ENCODE measurements at regions of chr9 and their contacts with region 1.

Region 1: DNA sequence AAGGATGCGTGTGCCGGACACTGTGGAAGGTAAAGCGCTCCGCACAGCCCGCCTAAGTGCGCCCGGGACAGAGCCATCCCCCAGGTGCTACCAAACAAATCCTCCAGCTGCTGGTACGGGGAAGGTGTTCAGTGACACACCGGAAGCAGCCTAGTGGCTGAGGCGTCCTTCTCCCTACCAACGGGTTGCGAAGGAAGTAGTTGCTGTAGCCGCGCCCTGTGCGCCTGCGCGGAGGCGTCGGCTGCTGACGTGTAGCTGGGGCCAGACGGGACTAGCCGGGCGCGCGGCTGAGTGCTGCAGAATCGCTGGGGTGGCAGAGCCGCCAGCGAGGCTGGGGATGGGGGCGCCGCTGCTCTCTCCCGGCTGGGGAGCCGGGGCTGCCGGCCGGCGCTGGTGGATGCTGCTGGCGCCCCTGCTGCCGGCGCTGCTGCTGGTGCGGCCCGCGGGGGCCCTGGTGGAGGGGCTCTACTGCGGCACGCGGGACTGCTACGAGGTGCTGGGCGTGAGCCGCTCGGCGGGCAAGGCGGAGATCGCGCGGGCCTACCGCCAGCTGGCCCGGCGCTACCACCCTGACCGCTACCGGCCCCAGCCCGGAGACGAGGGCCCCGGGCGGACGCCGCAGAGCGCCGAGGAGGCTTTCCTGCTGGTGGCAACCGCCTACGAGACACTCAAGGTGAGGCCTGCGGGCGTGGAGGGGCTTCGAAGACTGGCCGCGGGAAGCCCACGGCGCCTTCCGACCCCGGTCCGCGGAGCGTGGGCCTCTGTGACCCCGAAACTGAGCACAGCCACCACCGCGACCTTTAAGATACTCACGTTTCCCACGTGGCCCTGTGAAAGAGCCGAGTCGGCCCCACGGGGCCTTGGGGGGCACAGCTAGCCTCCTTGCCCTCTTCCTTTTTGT is at the start of gene DNAJC25:
- DNase-seq: peak; percentile 91 to 100 (median 96)
- ATAC-seq: peak; percentile 92
- H3K4me3 ChIP-seq: peak within 1 kb of the TSS; percentile 74
- H3K4me3 Mint-ChIP-seq: peak within 1 kb of the TSS; percentile 99
- H3K27ac ChIP-seq: peak within 1 kb of the TSS; percentile 3 to 75
- H3K27ac Mint-ChIP-seq: peak within 1 kb of the TSS; percentile 90
- H3K4me1 ChIP-seq: peaks cover 18% of the 10 kb centered on the region
- H3K4me1 Mint-ChIP-seq: peaks cover 58% of the 10 kb centered on the region
- H3K27me3 ChIP-seq: no peaks in the 10 kb centered on the region
- H3K27me3 Mint-ChIP-seq: no peaks in the 10 kb centered on the region
- CTCF ChIP-seq: no peak
- total RNA-seq, gene DNAJC25: 4.5 to 4.8 TPM

Region 2: GRCh38 chr9:111483862-111484571 is 147.3 kb before region 1 on chr9 and contains the start of gene ECPAS:
- CTCF ChIA-PET with region 1: no interaction called
- POLR2A ChIA-PET with region 1: interaction called, 6 read pairs
- intact Hi-C with region 1: loop called in 1 of 2 experiments (anchors 2 kb)
- DNase-seq: peak; percentile 27 to 83 (median 48)
- ATAC-seq: peak; percentile 60
- H3K4me3 ChIP-seq: peak within 1 kb of the TSS; percentile 95
- H3K4me3 Mint-ChIP-seq: peak within 1 kb of the TSS; percentile 86
- H3K27ac ChIP-seq: peak within 1 kb of the TSS; percentile 62 to 78
- H3K27ac Mint-ChIP-seq: peak within 1 kb of the TSS; percentile 83
- H3K4me1 ChIP-seq: peaks cover 12% of the 10 kb centered on the region
- H3K4me1 Mint-ChIP-seq: peaks cover 26% of the 10 kb centered on the region
- H3K27me3 ChIP-seq: no peaks in the 10 kb centered on the region
- H3K27me3 Mint-ChIP-seq: no peaks in the 10 kb centered on the region
- CTCF ChIP-seq: no peak
- total RNA-seq, gene ECPAS: 36.6 to 37.5 TPM

Region 3: GRCh38 chr9:111525056-111525977 is 106.0 kb before region 1 on chr9 and contains the start of gene ZNF483:
- CTCF ChIA-PET with region 1: no interaction called
- POLR2A ChIA-PET with region 1: interaction called, 6 read pairs
- intact Hi-C with region 1: loop called in 1 of 2 experiments (anchors 2 kb)
- DNase-seq: peak; percentile 54 to 90 (median 68)
- ATAC-seq: peak; percentile 90
- H3K4me3 ChIP-seq: peak within 1 kb of the TSS; percentile 93
- H3K4me3 Mint-ChIP-seq: peak within 1 kb of the TSS; percentile 97
- H3K27ac ChIP-seq: peak within 1 kb of the TSS; percentile 67 to 70
- H3K27ac Mint-ChIP-seq: peak within 1 kb of the TSS; percentile 97
- H3K4me1 ChIP-seq: peaks cover 19% of the 10 kb centered on the region
- H3K4me1 Mint-ChIP-seq: peaks cover 23% of the 10 kb centered on the region
- H3K27me3 ChIP-seq: peaks cover 0 to 2% of the 10 kb centered on the region in 2 experiments
- H3K27me3 Mint-ChIP-seq: no peaks in the 10 kb centered on the region
- CTCF ChIP-seq: no peak
- total RNA-seq, gene ZNF483: 28.5 to 32.9 TPM

Region 4: DNA sequence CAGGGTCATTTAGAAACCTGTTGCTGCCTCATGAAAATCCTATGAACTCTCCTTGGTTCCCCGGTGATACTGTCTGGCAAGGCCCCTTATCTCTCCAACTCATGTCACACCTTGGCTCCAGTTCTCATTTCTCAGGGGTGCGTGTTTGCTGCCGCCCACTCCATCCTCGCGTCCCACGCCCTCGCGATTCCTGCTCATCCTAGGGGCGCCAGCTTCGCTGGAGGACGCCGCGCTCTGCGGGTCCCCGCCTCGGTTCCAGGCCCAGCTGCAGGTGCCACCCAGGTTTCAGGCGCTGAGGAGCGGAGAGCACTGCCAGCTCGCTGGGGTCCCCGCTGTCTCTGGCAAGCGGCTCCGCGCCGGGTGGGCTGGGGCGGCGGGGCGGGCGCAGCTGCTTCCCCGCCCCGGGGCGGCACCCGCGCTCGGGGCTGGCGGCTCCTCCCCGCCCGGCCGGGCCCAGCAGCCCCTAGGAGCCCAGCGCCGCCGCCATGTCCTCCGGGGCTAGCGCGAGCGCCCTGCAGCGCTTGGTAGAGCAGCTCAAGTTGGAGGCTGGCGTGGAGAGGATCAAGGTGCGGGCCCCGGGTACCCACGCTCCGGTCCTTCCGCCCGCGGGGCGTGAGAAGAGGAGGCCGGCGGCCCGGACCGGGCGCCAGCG is 30.0 kb after region 1 on chr9 and contains the start of gene GNG10:
- CTCF ChIA-PET with region 1: no interaction called
- POLR2A ChIA-PET with region 1: interaction called, 47 read pairs
- intact Hi-C with region 1: loop called in 1 of 2 experiments (anchors 2 kb)
- DNase-seq: peak; percentile 34 to 84 (median 65)
- ATAC-seq: peak; percentile 91
- H3K4me3 ChIP-seq: peak within 1 kb of the TSS; percentile 76
- H3K4me3 Mint-ChIP-seq: peak within 1 kb of the TSS; percentile 91
- H3K27ac ChIP-seq: peak within 1 kb of the TSS; percentile 61 to 64
- H3K27ac Mint-ChIP-seq: peak within 1 kb of the TSS; percentile 78
- H3K4me1 ChIP-seq: peaks cover 37% of the 10 kb centered on the region
- H3K4me1 Mint-ChIP-seq: peaks cover 44% of the 10 kb centered on the region
- H3K27me3 ChIP-seq: no peaks in the 10 kb centered on the region
- H3K27me3 Mint-ChIP-seq: no peaks in the 10 kb centered on the region
- CTCF ChIP-seq: no peak
- total RNA-seq, gene GNG10: 2.8 to 3.0 TPM

Measured in CD4-positive, alpha-beta T cell (primary cell).